Calu3 (cell line): ENCODE measurements at regions of chr2 and their contacts with region 1.

Region 1: GRCh38 chr2:86675511-86676015 is 44.5 kb upstream of the RMND5A start:
- DNase-seq: peak; percentile 25
- H3K4me3 Mint-ChIP-seq: no peak overlapping the region
- H3K27ac Mint-ChIP-seq: no peak overlapping the region
- H3K4me1 Mint-ChIP-seq: peaks cover 10% of the 10 kb centered on the region
- H3K27me3 Mint-ChIP-seq: no peaks in the 10 kb centered on the region
- CTCF ChIP-seq: peak; percentile 40

Region 2: DNA sequence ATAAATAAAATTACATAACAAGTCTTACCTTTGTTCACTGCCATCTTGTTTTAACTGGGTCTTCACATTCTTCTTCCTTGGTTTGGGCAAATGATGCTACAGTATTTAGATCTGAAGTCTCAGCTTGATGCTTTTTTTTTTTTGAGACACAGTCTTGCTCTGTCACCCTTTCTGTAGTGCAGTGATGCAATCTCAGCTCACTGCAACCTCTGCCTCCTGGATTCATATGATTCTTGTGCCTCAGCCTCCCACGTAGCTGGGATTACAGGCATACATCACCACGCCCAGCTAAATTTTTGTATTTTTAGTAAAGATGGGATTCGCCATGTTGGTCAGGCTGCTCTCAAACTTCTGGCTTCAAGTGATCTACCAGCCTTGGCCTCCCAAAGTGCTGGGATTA is 1189.7 kb before region 1 on chr2:
- CTCF ChIA-PET with region 1: no interaction called
- intact Hi-C with region 1: no loop called
- DNase-seq: no peak
- H3K4me3 Mint-ChIP-seq: no peak overlapping the region
- H3K27ac Mint-ChIP-seq: no peak overlapping the region
- H3K4me1 Mint-ChIP-seq: no peaks in the 10 kb centered on the region
- H3K27me3 Mint-ChIP-seq: no peaks in the 10 kb centered on the region
- CTCF ChIP-seq: no peak

Region 3: GRCh38 chr2:86396291-86396785 is 279.2 kb before region 1 on chr2:
- CTCF ChIA-PET with region 1: interaction called, 7 read pairs
- intact Hi-C with region 1: loop called (anchors 1 kb)
- DNase-seq: peak; percentile 58
- H3K4me3 Mint-ChIP-seq: peak overlapping the region; percentile 27
- H3K27ac Mint-ChIP-seq: peak overlapping the region; percentile 5
- H3K4me1 Mint-ChIP-seq: peaks cover 24% of the 10 kb centered on the region
- H3K27me3 Mint-ChIP-seq: no peaks in the 10 kb centered on the region
- CTCF ChIP-seq: peak; percentile 33

Region 4: GRCh38 chr2:86518481-86518880 is 157.1 kb before region 1 on chr2:
- CTCF ChIA-PET with region 1: no interaction called
- intact Hi-C with region 1: loop called (anchors 2 kb)
- DNase-seq: peak; percentile 10
- H3K4me3 Mint-ChIP-seq: no peak overlapping the region
- H3K27ac Mint-ChIP-seq: no peak overlapping the region
- H3K4me1 Mint-ChIP-seq: no peaks in the 10 kb centered on the region
- H3K27me3 Mint-ChIP-seq: no peaks in the 10 kb centered on the region
- CTCF ChIP-seq: peak; percentile 28

Region 5: DNA sequence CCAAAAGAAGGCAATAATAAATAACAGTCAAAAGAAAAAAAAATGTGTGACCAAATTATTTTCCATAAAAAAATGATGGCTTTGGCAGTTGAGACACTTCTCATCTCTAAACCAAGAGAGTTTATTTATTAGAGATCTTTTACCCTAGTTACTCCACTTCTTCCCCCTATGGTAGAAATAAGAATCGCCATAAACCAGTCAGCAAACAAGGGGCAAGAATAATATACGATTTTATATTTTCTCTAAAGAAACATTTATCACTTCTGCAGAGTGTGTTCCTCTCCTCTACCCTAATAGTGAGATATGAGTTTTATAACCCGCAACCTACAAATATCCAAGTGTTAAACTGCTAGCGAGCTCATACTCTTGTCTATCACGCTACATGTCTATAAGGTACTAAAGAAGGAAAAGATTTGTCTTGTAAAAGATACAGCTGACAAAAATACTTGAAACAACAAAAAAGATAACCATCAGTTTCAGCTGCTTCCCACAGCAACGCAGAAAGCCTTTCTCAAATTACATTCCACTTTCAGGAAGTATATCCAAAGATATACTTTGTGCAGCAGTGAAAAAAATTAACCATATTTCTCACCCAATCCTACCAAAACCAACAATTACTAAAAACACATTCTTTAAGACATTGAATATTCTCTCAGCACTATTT is 54.2 kb before region 1 on chr2:
- CTCF ChIA-PET with region 1: no interaction called
- intact Hi-C with region 1: loop called (anchors 2 kb)
- DNase-seq: no peak
- H3K4me3 Mint-ChIP-seq: peak overlapping the region; percentile 92
- H3K27ac Mint-ChIP-seq: peak overlapping the region; percentile 95
- H3K4me1 Mint-ChIP-seq: peaks cover 8% of the 10 kb centered on the region
- H3K27me3 Mint-ChIP-seq: no peaks in the 10 kb centered on the region
- CTCF ChIP-seq: no peak